Activated CD4-positive, alpha-beta T cell treated with anti-CD3 and anti-CD28 coated beads, Interleukin-2, amount 10 ng/mL, durations not matched to agents 24 days and 14 days (primary cell): ENCODE measurements at regions of chr3 and their contacts with region 1.

Region 1: GRCh38 chr3:50568947-50569749 is at the start of gene HEMK1:
- DNase-seq: peak; percentile 98
- H3K4me3 Mint-ChIP-seq: peak within 1 kb of the TSS; percentile 98
- H3K27ac Mint-ChIP-seq: peak within 1 kb of the TSS; percentile 99
- H3K4me1 Mint-ChIP-seq: peaks cover 68% of the 10 kb centered on the region
- H3K27me3 Mint-ChIP-seq: no peaks in the 10 kb centered on the region
- total RNA-seq, gene HEMK1: 62.9 and 66.0 TPM in 2 replicates

Region 2: DNA sequence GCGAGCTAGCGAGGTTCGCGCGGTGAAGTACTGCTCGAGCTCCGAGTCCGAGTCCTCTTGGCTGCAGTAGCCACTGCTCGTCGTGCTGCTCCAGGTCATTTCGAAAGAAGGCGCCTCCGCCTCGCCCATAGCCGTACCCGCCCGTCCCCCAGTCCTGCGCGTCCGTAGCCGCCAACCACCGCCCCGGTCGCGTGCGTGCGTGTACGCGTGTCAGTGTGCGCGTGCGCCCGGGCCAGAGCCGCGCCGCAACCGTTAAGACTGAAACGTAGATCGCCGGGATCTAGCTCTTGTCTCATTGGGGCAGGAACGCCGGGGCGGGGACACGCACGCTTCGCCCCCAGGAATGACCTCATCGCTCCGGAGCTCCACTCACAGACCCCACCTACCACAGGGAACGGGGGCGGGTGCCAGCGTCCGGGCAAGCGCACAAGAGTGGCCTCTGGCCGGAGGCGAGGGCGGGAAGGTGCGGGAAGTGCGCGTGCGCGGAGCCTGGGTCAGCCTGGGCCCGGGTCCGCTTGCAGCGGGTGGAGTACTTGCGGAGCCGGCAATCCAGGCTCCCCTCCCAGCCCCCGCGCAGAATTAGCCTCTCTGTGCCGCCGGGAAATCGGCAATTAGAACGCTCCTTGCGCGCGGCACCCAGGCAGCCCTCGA is 231.8 kb before region 1 on chr3:
- intact Hi-C with region 1: loop called (anchors 5 kb)
- DNase-seq: peak; percentile 99
- H3K4me3 Mint-ChIP-seq: peak overlapping the region; percentile 85
- H3K27ac Mint-ChIP-seq: peak overlapping the region; percentile 99
- H3K4me1 Mint-ChIP-seq: peaks cover 54% of the 10 kb centered on the region
- H3K27me3 Mint-ChIP-seq: no peaks in the 10 kb centered on the region

Region 3: GRCh38 chr3:50587806-50588758 is 18.9 kb after region 1 on chr3:
- intact Hi-C with region 1: loop called (anchors 1 kb)
- DNase-seq: peak; percentile 89
- H3K4me3 Mint-ChIP-seq: peak overlapping the region; percentile 72
- H3K27ac Mint-ChIP-seq: peak overlapping the region; percentile 95
- H3K4me1 Mint-ChIP-seq: peaks cover 79% of the 10 kb centered on the region
- H3K27me3 Mint-ChIP-seq: no peaks in the 10 kb centered on the region

Region 4: GRCh38 chr3:50652709-50653108 is 83.6 kb after region 1 on chr3:
- intact Hi-C with region 1: loop called (anchors 1 kb)
- DNase-seq: peak; percentile 83
- H3K4me3 Mint-ChIP-seq: no peak overlapping the region
- H3K27ac Mint-ChIP-seq: peak overlapping the region; percentile 5
- H3K4me1 Mint-ChIP-seq: peaks cover 23% of the 10 kb centered on the region
- H3K27me3 Mint-ChIP-seq: no peaks in the 10 kb centered on the region

Region 5: GRCh38 chr3:51371943-51372557 is 802.9 kb after region 1 on chr3:
- intact Hi-C with region 1: loop called (anchors 5 kb)
- DNase-seq: peak; percentile 90
- H3K4me3 Mint-ChIP-seq: no peak overlapping the region
- H3K27ac Mint-ChIP-seq: no peak overlapping the region
- H3K4me1 Mint-ChIP-seq: peaks cover 2% of the 10 kb centered on the region
- H3K27me3 Mint-ChIP-seq: no peaks in the 10 kb centered on the region